PC-3 (cell line): ENCODE measurements at regions of chr6 and their contacts with region 1.

Region 1: DNA sequence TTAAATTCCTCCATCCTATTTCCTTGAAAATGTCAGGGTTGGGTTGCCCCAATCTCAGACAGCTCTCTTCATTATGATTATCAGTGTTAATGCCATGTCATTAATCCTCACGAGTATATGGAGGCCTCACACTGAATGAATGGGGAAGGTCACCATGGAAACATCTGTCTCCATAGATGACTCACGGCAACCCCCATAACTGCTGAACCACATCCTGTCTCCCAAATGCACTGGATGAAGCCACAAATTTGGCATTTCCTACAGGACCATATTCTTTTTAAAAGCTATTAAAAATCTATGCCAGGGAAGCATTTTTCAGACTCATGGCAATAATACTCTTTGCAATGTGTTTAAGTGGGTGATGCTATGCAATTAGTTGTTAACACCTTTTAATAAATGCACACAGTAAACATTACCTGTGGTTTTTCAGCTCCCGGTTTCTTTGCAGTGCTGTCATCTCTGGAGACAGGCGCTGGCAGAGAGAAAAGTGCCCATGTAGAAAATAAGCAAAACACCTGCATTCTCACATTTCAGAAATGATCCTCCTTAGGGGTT is 80.1 kb upstream of the PTPRK start:
- DNase-seq: peak; percentile 80
- ATAC-seq: peak; percentile 68
- H3K4me3 ChIP-seq: peak overlapping the region; percentile 35; the same call in 1 of the 2 replicates
- H3K27ac ChIP-seq: peak overlapping the region; percentile 95
- H3K4me1 ChIP-seq: peaks cover 54% of the 10 kb centered on the region
- H3K27me3 ChIP-seq: no peaks in the 10 kb centered on the region
- CTCF ChIP-seq: no peak

Region 2: GRCh38 chr6:128491610-128492206 is 108.8 kb before region 1 on chr6:
- CTCF ChIA-PET with region 1: no interaction called
- POLR2A ChIA-PET with region 1: no interaction called
- intact Hi-C with region 1: no loop called
- DNase-seq: peak; percentile 37
- ATAC-seq: peak; percentile 36
- H3K4me3 ChIP-seq: peak overlapping the region; percentile 64
- H3K27ac ChIP-seq: peak overlapping the region; percentile 94
- H3K4me1 ChIP-seq: peaks cover 47% of the 10 kb centered on the region
- H3K27me3 ChIP-seq: no peaks in the 10 kb centered on the region
- CTCF ChIP-seq: no peak

Region 3: DNA sequence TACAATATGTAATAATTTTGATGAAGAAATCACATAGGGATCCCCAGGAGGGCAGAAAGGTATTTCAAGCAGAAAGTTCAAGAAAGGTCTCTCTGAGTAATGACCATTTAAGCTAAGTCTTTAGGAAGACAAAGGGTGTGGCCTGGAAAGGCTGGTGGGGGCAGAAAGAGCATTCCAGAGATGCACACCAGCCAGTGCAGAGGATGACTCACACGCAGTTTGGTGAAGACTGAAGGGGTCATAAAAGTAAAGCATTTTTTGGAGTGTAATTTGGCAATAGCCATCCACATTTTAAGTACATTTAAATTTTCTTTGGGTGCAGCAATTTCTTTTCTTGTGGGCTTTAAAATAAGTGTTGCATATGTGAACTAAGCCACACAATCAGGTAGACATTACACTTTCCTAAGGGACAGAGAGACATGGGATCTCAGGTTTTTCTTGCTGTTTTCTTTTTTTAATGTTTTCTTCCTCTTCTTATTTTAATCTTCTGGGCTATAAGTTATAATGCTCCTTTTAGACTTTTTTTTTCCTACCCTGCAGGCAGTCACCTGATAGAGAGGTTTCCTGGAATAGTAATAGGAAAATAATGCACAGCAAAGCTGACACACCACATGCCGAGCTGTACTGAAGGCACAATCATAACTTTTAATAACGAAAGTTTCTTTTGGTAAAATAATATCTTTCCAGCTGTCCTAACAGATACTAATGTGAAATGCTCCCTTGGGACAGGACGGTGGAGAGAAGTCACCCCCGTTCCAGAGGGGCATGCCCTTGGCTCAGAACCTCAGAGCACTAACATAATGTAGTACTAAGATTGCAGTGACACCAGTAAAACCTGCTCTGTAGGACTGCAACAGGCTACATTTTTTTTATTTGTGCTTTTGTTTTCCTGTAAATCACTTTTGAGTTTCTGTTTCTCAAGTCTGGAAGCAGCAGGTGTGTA is 30.5 kb before region 1 on chr6:
- CTCF ChIA-PET with region 1: no interaction called
- POLR2A ChIA-PET with region 1: no interaction called
- intact Hi-C with region 1: loop called (anchors 1 kb)
- DNase-seq: peak; percentile 92
- ATAC-seq: peak; percentile 76
- H3K4me3 ChIP-seq: peak overlapping the region; percentile 62
- H3K27ac ChIP-seq: peak overlapping the region; percentile 93
- H3K4me1 ChIP-seq: peaks cover 62% of the 10 kb centered on the region
- H3K27me3 ChIP-seq: no peaks in the 10 kb centered on the region
- CTCF ChIP-seq: no peak

Region 4: DNA sequence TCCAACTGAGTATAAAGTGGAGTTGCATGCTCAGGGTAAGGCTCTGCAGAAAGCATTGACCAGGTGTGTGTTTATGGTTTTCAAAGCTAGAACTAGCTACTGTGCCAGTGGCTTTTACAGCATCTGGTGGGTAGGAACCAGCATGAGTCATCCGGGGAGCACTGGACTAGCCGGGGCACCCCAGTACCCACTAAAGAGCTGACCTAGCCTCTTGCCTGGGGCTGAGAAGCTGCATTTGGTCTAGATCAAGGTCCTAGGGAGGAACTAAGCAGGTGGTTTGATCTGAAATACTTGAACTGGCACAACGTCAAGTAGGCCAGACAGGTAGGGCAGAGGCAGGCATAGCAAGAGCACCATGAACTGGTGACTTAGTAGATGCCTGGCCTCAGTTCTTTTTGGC is 29.7 kb after region 1 on chr6:
- CTCF ChIA-PET with region 1: no interaction called
- POLR2A ChIA-PET with region 1: no interaction called
- intact Hi-C with region 1: loop called (anchors 2 kb)
- DNase-seq: peak; percentile 63
- ATAC-seq: peak; percentile 46
- H3K4me3 ChIP-seq: no peak overlapping the region
- H3K27ac ChIP-seq: no peak overlapping the region
- H3K4me1 ChIP-seq: peaks cover 25% of the 10 kb centered on the region
- H3K27me3 ChIP-seq: no peaks in the 10 kb centered on the region
- CTCF ChIP-seq: no peak